H1 (cell line): ENCODE measurements at regions of chr6 and their contacts with region 1.

Region 1: GRCh38 chr6:31079656-31080261 is 32.6 kb downstream of the C6orf15 start:
- DNase-seq: peak; percentile 29 to 84
- H3K4me3 ChIP-seq: no peak overlapping the region
- H3K27ac ChIP-seq: no peak overlapping the region
- H3K4me1 ChIP-seq: peaks cover 0 to 4% (median 3%) of the 10 kb centered on the region in 4 experiments; a peak in 6 of 7 replicates
- H3K27me3 ChIP-seq: no peaks in the 10 kb centered on the region
- CTCF ChIP-seq: peak; percentile 27 to 83 (median 76)
- EP300 ChIP-seq: peak in 1 of 2 experiments; percentile 28; a peak in 1 of 3 replicates
- POLR2A ChIP-seq: no peak
- RAD21 ChIP-seq: peak; percentile 79 to 88

Region 2: DNA sequence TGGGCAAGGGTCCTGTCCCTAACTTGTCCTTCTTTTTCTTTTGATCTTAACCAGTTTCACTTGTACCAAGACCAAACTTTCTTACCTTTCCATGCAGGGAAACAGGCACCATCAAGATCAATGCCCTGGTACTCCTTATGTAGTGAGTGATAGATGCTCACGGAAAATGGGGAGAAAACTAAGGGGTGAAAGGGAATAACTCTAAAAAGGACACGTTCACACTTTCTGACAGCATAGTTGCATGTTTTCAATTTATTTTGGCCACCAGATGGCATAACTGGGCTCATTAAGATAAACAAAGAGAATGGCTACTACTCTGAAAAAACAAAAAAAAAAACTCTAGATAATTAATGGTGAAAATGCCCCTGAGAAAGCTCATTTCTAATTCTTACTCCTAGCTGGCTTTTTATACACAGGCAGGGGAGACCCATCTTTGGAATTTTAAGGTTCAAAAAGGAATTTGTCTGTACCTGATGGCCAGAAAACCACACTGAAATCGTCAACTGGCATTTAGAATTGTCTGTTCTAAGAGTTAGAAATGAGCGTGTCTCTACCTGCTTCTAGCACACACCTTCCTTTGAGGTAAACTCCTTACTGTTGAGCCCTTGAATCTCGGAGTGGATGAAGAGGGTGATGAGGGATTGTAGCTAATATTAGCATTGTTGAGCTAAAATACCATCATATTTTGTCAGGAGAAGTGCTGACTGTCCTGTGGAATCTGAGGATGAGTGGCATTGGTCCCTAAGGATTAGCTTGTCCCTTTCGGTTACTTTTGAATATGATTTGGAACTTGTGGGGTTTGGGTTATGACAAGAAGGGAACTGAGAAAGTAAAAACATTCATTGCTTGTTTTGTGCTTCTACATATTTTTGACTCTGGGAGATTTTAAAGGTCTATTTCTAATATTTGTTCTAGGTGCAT is 257.6 kb before region 1 on chr6:
- CTCF ChIA-PET with region 1: interaction called, 18 read pairs
- POLR2A ChIA-PET with region 1: no interaction called
- DNase-seq: no peak
- H3K4me3 ChIP-seq: no peak overlapping the region
- H3K27ac ChIP-seq: no peak overlapping the region
- H3K4me1 ChIP-seq: peaks cover 0 to 3% (median 0%) of the 10 kb centered on the region in 4 experiments; a peak in 1 of 7 replicates
- H3K27me3 ChIP-seq: no peaks in the 10 kb centered on the region
- CTCF ChIP-seq: peak in 2 of 3 experiments; percentile 28 to 30; a peak in 2 of 4 replicates
- EP300 ChIP-seq: no peak
- POLR2A ChIP-seq: no peak
- RAD21 ChIP-seq: peak; percentile 27 to 42; a peak in 3 of 4 replicates

Region 3: DNA sequence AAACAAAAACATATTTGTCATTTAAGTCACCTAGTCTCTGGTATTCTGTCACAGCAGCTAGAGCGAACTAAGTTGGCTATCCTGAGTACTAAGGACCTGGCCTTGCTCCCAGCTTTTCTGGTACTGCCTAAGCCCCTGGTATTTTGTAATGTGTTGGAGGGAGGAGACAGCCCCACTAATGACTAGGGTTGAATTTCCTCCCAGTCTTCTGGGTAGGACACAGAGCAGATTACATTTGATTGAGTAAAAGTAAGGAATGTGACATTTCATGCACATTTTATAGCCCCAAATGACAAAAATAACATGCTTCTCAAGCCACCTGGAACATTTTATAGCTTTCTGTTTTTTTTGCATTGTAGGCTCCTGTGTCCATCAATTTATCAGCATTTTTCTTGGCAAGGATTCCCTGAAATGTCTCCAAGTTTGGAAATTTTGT is 243.3 kb before region 1 on chr6:
- CTCF ChIA-PET with region 1: interaction called, 13 read pairs
- POLR2A ChIA-PET with region 1: no interaction called
- DNase-seq: no peak
- H3K4me3 ChIP-seq: no peak overlapping the region
- H3K27ac ChIP-seq: no peak overlapping the region
- H3K4me1 ChIP-seq: peaks cover 0 to 5% (median under 1%) of the 10 kb centered on the region in 4 experiments; a peak in 1 of 7 replicates
- H3K27me3 ChIP-seq: no peaks in the 10 kb centered on the region
- CTCF ChIP-seq: no peak
- EP300 ChIP-seq: no peak
- POLR2A ChIP-seq: peak; percentile 10 to 16; a peak in 2 of 3 replicates
- RAD21 ChIP-seq: no peak

Region 4: DNA sequence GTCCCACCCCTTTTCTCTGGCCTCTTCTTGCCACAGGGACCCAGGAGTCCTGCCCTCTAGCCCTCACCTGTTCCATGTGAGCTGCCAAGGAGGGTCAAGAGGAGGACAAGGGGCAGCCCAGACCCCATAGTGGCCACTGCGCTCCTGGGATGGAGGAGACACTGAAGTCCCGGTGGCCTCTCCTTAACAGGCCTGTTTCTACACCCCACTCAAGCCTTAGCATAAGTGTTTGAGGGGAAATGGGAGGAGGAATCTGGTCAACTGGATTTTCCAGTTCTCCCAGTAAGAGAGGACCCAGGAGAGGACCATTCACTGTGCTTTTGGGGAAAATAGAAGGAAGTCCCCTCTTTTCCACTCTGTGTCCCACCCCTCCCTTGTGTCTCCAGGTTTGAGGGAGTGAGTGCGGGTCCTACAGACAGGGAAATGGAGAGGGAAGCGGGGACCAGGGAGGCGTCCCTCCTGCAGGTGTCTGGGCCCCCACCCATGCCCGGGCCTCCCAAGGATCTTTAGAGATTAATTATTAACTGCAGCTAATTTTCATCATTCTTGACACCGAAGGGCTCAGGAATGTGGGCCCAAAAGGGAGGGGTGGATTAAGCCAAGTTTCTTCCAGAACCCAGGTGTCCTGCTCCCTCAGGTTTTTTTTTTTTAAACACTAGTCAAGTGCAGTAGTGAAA is 147.7 kb before region 1 on chr6 and contains the start of gene SFTA2:
- CTCF ChIA-PET with region 1: interaction called, 285 read pairs
- POLR2A ChIA-PET with region 1: no interaction called
- DNase-seq: no peak
- H3K4me3 ChIP-seq: no peak within 1 kb of the TSS
- H3K27ac ChIP-seq: no peak within 1 kb of the TSS
- H3K4me1 ChIP-seq: 0 out of 7 replicates have a peak, but pooled peaks cover 0 to 3% (median 0%) of the 10 kb centered on the region in 4 experiments
- H3K27me3 ChIP-seq: no peaks in the 10 kb centered on the region
- CTCF ChIP-seq: no peak
- EP300 ChIP-seq: no peak
- POLR2A ChIP-seq: no peak
- RAD21 ChIP-seq: no peak
- total RNA-seq, gene SFTA2: not detected in 2 replicates

Region 5: DNA sequence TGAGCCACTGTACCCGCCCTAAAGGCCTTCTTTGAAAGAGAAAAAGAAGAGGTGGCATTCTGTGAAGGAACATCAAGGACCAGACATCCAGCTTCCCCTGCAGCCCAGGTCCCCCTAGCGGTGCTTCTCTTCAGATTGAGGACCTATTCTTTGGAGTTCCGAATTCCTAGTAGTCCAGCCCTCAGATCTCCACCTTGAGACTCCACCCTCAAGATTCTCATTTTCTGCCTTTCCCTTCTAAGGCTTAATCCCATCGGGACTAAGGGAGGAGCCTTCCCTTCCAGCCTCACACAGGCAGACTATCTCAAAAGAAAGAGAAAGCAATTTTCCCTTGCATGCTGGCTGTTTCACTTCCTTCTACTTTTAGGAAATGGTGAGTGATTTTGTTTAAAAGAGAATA is 37.0 kb before region 1 on chr6:
- CTCF ChIA-PET with region 1: interaction called, 32 read pairs
- POLR2A ChIA-PET with region 1: no interaction called
- DNase-seq: peak; percentile 21 to 60
- H3K4me3 ChIP-seq: no peak overlapping the region
- H3K27ac ChIP-seq: no peak overlapping the region
- H3K4me1 ChIP-seq: no peaks in the 10 kb centered on the region
- H3K27me3 ChIP-seq: no peaks in the 10 kb centered on the region; a peak in 1 of 7 replicates
- CTCF ChIP-seq: peak; percentile 58 to 75 (median 74)
- EP300 ChIP-seq: no peak
- POLR2A ChIP-seq: no peak
- RAD21 ChIP-seq: peak; percentile 61 to 72

Region 6: DNA sequence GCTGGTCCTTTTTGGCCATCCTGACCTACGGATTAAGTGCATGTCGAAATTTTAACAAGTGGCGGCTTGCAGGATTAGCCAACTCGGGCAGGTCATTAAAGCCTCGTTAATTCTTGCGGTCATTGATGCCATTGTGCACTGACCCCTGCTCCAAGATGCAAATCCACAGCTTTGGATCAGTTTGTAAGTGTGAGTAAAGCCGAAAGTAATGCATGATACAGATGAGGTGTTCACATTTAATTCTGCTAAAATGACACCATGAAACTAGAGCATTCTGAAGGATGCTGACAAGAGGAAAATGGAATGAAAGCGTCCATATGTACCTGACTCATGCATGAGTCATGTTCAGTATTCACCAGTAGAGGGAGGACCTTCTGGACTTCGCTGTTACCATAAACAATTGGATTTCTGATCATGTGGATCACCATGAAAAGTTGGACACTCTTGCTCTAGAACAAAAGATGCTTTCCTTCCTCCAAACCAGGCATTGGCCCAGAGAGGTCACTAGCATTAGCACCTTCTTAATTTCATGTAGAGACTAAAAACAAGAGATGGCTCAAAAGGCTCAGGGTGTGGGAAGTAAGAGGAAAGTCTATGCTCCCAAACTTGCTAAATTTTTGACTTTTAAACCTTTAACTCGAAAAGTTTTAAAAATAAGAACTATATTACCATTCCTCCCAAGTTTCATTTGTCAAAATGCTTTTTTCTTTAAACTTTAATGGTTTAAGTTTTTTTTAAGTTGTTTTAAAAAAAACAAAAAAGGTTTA is 21.4 kb before region 1 on chr6:
- CTCF ChIA-PET with region 1: interaction called, 11 read pairs
- POLR2A ChIA-PET with region 1: no interaction called
- DNase-seq: no peak
- H3K4me3 ChIP-seq: no peak overlapping the region
- H3K27ac ChIP-seq: no peak overlapping the region
- H3K4me1 ChIP-seq: no peaks in the 10 kb centered on the region; a peak in 1 of 7 replicates
- H3K27me3 ChIP-seq: no peaks in the 10 kb centered on the region
- CTCF ChIP-seq: peak in 2 of 3 experiments; percentile 14 to 57; a peak in 2 of 4 replicates
- EP300 ChIP-seq: no peak
- POLR2A ChIP-seq: no peak
- RAD21 ChIP-seq: peak in 1 of 2 experiments; percentile 11; a peak in 1 of 4 replicates

Region 7: GRCh38 chr6:31094389-31094881 is 14.7 kb after region 1 on chr6:
- CTCF ChIA-PET with region 1: interaction called, 18 read pairs
- POLR2A ChIA-PET with region 1: no interaction called
- DNase-seq: no peak
- H3K4me3 ChIP-seq: no peak overlapping the region
- H3K27ac ChIP-seq: no peak overlapping the region
- H3K4me1 ChIP-seq: peaks cover 0 to 3% (median 0%) of the 10 kb centered on the region in 4 experiments; a peak in 3 of 7 replicates
- H3K27me3 ChIP-seq: no peaks in the 10 kb centered on the region
- CTCF ChIP-seq: no peak
- EP300 ChIP-seq: no peak
- POLR2A ChIP-seq: no peak
- RAD21 ChIP-seq: no peak

Region 8: GRCh38 chr6:31308050-31308844 is 228.5 kb after region 1 on chr6:
- CTCF ChIA-PET with region 1: no interaction called
- POLR2A ChIA-PET with region 1: no interaction called
- DNase-seq: peak; percentile 66 to 84
- H3K4me3 ChIP-seq: peak overlapping the region; percentile 38 to 73 (median 44)
- H3K27ac ChIP-seq: no peak overlapping the region
- H3K4me1 ChIP-seq: peaks cover 0 to 2% (median 0%) of the 10 kb centered on the region in 4 experiments; a peak in 3 of 7 replicates
- H3K27me3 ChIP-seq: peaks cover 0 to 7% (median 4%) of the 10 kb centered on the region in 4 experiments; a peak in 4 of 7 replicates
- CTCF ChIP-seq: no peak
- EP300 ChIP-seq: no peak
- POLR2A ChIP-seq: 0 out of 3 replicates have a peak, but pooled peaks of 1 of the 2 experiments have one; percentile 23
- RAD21 ChIP-seq: no peak